Mammary epithelial cell (primary cell): ENCODE measurements at regions of chr7 and their contacts with region 1.

Region 1: GRCh38 chr7:116929914-116930913 is 23.1 kb upstream of the ST7 start:
- DNase-seq: peak; percentile 61
- H3K4me3 ChIP-seq: no peak overlapping the region
- H3K27ac ChIP-seq: no peak overlapping the region
- H3K4me1 ChIP-seq: peaks cover 6% of the 10 kb centered on the region
- H3K27me3 ChIP-seq: no peaks in the 10 kb centered on the region
- CTCF ChIP-seq: peak; percentile 92

Region 2: DNA sequence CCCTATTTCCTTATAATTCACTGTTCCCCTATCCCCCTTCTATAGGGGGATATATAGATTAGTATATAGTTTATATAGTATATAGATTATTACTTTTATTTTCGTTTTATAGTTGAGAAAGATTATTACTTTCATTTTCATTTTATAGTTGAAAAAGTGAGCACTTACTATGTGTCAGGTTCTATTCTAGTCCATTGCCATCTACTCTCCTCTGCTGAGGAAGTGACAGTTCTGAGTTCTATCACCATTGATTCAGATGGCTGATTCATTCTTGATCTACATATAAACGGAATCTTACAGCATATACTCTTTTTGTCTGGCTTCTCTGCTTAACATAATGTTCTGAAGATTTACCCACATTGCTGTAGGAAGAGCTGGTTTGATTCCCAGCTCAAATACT is 451.4 kb before region 1 on chr7:
- CTCF ChIA-PET with region 1: no interaction called
- dilution Hi-C with region 1: no loop called
- in situ Hi-C with region 1: no loop called
- intact Hi-C with region 1: no loop called
- DNase-seq: no peak
- H3K4me3 ChIP-seq: no peak overlapping the region
- H3K27ac ChIP-seq: no peak overlapping the region
- H3K4me1 ChIP-seq: peaks cover 3% of the 10 kb centered on the region
- H3K27me3 ChIP-seq: no peaks in the 10 kb centered on the region
- CTCF ChIP-seq: no peak

Region 3: GRCh38 chr7:116953727-116954442 is 23.7 kb after region 1 on chr7:
- CTCF ChIA-PET with region 1: interaction called, 5 read pairs
- dilution Hi-C with region 1: no loop called
- in situ Hi-C with region 1: no loop called
- intact Hi-C with region 1: loop called (anchors 1 kb)
- DNase-seq: peak; percentile 80
- H3K4me3 ChIP-seq: peak overlapping the region; percentile 79 to 93 (median 84)
- H3K27ac ChIP-seq: peak overlapping the region; percentile 96
- H3K4me1 ChIP-seq: peaks cover 17% of the 10 kb centered on the region
- H3K27me3 ChIP-seq: no peaks in the 10 kb centered on the region
- CTCF ChIP-seq: no peak

Region 4: DNA sequence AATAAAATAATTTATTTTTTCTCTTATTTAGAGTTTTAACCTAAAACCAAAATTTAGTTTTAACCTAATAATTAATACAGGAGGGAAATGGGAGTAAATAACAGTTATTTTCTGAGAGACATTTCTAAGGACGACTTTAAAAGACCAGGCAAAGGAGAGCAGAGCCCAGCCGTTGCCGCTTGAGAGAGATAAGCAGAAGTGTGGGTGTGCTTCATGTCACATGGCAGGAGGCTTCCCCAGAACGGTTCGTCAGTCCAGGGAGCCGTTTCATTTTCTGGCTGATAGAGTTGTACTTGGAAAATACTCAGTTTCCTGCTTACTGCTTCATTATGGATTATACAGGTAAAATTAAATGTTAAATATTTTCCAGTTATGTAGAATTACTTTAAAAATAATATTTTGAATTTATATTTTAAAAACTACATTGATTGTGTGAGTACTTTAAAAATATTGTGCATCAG is 84.5 kb after region 1 on chr7:
- CTCF ChIA-PET with region 1: no interaction called
- dilution Hi-C with region 1: no loop called
- in situ Hi-C with region 1: no loop called
- intact Hi-C with region 1: loop called (anchors 1 kb)
- DNase-seq: peak; percentile 54
- H3K4me3 ChIP-seq: peak overlapping the region; percentile 2 to 37 (median 20)
- H3K27ac ChIP-seq: peak overlapping the region; percentile 58
- H3K4me1 ChIP-seq: peaks cover 43% of the 10 kb centered on the region
- H3K27me3 ChIP-seq: no peaks in the 10 kb centered on the region
- CTCF ChIP-seq: no peak

Region 5: GRCh38 chr7:117119192-117119924 is 189.1 kb after region 1 on chr7:
- CTCF ChIA-PET with region 1: interaction called, 20 read pairs
- dilution Hi-C with region 1: no loop called
- in situ Hi-C with region 1: loop called in 1 of 2 experiments (anchors 5 kb)
- intact Hi-C with region 1: loop called (anchors 1 kb)
- DNase-seq: peak; percentile 57
- H3K4me3 ChIP-seq: no peak overlapping the region
- H3K27ac ChIP-seq: no peak overlapping the region
- H3K4me1 ChIP-seq: peaks cover 4% of the 10 kb centered on the region
- H3K27me3 ChIP-seq: no peaks in the 10 kb centered on the region
- CTCF ChIP-seq: peak; percentile 86 to 94

Region 6: GRCh38 chr7:117212969-117213877 is 283.0 kb after region 1 on chr7:
- CTCF ChIA-PET with region 1: interaction called, 4 read pairs
- dilution Hi-C with region 1: no loop called
- in situ Hi-C with region 1: no loop called
- intact Hi-C with region 1: loop called (anchors 5 kb)
- DNase-seq: peak; percentile 38
- H3K4me3 ChIP-seq: no peak overlapping the region
- H3K27ac ChIP-seq: no peak overlapping the region
- H3K4me1 ChIP-seq: no peaks in the 10 kb centered on the region
- H3K27me3 ChIP-seq: no peaks in the 10 kb centered on the region
- CTCF ChIP-seq: peak; percentile 92 to 98